A549 (cell line): ENCODE measurements at regions of chr3 and their contacts with region 1.

Region 1: DNA sequence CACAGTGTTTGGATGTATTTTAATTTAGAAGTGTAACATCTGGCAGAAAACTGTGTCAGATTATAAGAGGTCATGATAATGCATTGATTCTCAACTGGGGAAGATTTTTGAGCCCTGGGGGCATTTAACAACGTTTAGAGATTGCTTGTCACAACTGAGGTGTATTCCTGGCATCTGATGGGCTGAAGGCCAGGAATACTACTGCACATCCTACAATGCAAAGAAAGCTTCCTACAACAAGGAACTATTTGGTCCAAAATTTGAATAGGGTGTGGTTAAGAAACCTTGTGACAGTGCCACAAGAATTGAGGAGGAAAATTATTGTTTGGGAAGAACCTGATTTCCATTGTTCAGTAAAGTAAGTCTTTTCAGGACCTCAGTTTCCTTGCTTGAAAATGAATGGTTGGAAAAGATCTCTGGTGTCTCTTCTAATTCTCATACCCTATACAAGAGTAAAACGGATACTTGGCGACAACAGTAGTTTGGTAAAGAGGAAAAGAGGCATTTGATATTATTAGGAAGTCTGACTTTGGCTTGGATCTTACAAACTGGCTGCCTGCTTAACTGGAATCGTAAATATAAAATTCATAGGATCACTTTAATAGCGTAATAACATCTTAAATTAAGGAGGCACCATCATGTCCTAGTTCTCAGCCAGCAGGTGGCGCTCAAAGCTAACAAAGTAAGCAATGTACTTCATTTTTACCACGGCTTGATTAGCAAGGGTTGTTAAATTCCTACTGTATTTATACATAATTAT is 4.3 kb downstream of the DAZL start:
- DNase-seq: peak; percentile 44 to 83
- ATAC-seq: peak; percentile 56 to 91; a peak in 4 of 6 replicates
- H3K4me3 ChIP-seq: no peak overlapping the region
- H3K27ac ChIP-seq: no peak overlapping the region
- H3K4me1 ChIP-seq: no peaks in the 10 kb centered on the region
- CTCF ChIP-seq: peak; percentile 97
- EP300 ChIP-seq: no peak
- POLR2A ChIP-seq: no peak
- RAD21 ChIP-seq: peak; percentile 93 to 96

Region 2: GRCh38 chr3:17227472-17227871 is 626.5 kb after region 1 on chr3:
- CTCF ChIA-PET with region 1: interaction called, 24 read pairs
- POLR2A ChIA-PET with region 1: no interaction called
- DNase-seq: no peak
- ATAC-seq: no peak
- H3K4me3 ChIP-seq: no peak overlapping the region
- H3K27ac ChIP-seq: no peak overlapping the region
- H3K4me1 ChIP-seq: no peaks in the 10 kb centered on the region
- CTCF ChIP-seq: no peak
- EP300 ChIP-seq: no peak
- POLR2A ChIP-seq: no peak
- RAD21 ChIP-seq: no peak

Region 3: DNA sequence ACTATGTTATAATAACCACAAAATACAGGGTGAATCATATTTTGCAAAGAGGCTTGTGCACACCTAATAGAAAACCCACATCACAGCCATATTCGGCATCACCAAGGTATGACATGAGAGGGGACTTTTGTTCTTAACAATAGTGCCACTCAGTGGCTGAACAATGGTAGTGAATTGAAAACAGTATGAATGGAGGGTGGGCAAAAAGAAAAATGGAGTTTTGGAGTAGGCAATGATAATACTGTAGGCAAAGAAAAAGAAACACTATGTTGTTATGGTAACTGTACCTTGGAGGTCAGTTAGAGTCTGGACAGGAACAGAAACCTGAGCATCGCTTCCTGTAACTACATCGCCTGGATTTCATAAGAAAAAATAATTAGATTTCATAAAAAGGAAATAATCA is 632.4 kb after region 1 on chr3:
- CTCF ChIA-PET with region 1: interaction called, 24 read pairs
- POLR2A ChIA-PET with region 1: no interaction called
- DNase-seq: peak; percentile 46 to 59
- ATAC-seq: peak; percentile 97 to 98
- H3K4me3 ChIP-seq: no peak overlapping the region
- H3K27ac ChIP-seq: no peak overlapping the region
- H3K4me1 ChIP-seq: no peaks in the 10 kb centered on the region
- CTCF ChIP-seq: peak; percentile 83
- EP300 ChIP-seq: no peak
- POLR2A ChIP-seq: no peak
- RAD21 ChIP-seq: peak; percentile 88 to 91